Mammary epithelial cell (primary cell): ENCODE measurements at regions of chr9 and their contacts with region 1.

Region 1: DNA sequence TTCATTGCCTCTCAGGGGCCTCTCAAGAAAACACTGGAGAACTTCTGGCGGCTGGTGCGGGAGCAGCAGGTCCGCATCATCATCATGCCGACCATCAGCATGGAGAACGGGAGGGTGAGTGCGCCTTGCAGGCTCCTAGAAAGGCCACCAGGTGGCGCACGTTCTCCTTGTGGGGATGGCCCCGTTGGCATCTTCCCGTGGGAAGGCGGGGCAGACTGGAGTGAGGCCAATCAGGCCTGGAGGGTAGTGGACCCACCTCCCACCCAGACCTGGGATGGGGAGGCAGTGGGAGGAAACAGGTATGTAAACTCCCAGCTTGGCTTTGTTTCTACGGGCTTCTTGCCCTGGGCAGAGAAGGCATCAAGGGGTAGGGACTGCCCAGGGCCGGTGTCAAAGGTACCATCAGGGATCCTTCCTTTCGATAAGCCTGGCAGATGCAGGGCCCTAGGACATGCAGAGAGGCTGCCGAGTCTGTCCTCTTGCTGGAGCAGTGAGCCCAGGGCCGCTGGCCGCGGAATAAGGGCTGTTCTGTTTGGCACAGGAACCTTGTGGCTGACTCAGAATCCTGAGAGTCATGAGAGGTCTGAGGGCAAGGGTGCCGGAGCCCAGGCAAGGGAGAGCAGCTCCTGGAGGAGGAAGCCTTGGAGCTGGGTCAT is 18.9 kb upstream of the SPTLC1 start:
- DNase-seq: peak; percentile 80
- H3K4me3 ChIP-seq: peak overlapping the region in 1 of 3 experiments; percentile 31
- H3K27ac ChIP-seq: no peak overlapping the region
- H3K4me1 ChIP-seq: peaks cover 11% of the 10 kb centered on the region
- H3K27me3 ChIP-seq: no peaks in the 10 kb centered on the region
- CTCF ChIP-seq: peak; percentile 94 to 98

Region 2: GRCh38 chr9:91694081-91694870 is 439.8 kb before region 1 on chr9:
- CTCF ChIA-PET with region 1: no interaction called
- dilution Hi-C with region 1: no loop called
- in situ Hi-C with region 1: no loop called
- intact Hi-C with region 1: no loop called
- DNase-seq: no peak
- H3K4me3 ChIP-seq: no peak overlapping the region
- H3K27ac ChIP-seq: no peak overlapping the region
- H3K4me1 ChIP-seq: no peaks in the 10 kb centered on the region
- H3K27me3 ChIP-seq: no peaks in the 10 kb centered on the region
- CTCF ChIP-seq: no peak

Region 3: DNA sequence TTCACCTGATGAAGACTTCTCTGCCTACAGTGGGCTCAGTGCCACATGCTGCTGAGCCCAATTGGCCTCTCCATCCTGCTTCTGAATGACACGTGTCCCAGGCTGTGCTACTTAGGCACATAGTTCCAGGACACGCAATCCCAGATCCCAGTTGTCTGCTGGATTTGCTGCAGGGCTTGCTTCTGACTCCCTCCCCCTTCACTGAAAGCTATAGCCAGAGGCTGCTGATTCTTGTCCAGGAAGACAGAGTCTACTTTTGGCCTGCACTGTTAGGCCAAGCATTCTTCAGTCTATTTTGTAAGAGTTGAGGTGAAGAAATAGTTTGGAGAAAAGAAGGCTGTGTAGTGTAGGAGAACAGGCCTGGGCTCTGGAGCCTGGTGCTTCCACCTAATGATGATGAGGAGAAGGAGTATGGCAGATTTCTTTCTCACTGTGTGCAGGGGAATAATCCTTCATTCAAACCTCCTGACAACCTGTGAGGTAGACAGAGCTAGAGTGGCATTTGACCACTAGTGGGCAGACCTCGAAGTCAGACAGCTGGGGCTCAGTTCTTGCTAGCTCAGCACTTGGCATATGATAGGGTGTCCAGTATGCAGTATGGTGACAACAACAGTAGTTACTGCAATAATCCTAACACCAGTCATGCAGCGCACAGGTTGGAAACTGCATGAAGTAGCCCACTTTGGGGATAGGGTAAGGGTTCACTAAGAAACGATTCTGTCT is 367.8 kb after region 1 on chr9:
- CTCF ChIA-PET with region 1: no interaction called
- dilution Hi-C with region 1: no loop called
- in situ Hi-C with region 1: no loop called
- intact Hi-C with region 1: loop called (anchors 10 kb)
- DNase-seq: peak; percentile 38
- H3K4me3 ChIP-seq: no peak overlapping the region
- H3K27ac ChIP-seq: no peak overlapping the region
- H3K4me1 ChIP-seq: peaks cover 29% of the 10 kb centered on the region
- H3K27me3 ChIP-seq: no peaks in the 10 kb centered on the region
- CTCF ChIP-seq: peak; percentile 62 to 73

Region 4: DNA sequence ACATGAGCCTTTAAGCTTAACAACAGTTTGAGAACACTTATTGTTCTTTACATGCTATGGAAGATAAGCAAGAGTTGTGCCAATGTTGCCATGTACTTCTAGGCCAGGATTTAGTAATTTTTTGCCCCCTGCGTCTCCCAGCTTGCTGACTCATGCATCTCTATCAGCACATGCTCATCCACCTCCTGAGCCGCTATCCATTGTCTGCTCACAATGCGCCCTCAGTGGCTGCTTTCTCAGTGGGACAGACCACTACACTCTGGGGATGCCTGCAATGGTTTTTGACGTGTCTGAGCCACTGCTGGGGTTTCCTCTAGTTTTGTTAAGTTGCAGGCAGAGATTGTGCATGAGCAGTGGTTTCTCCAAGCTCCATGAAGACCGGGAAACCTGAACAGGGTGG is 1391.4 kb after region 1 on chr9:
- CTCF ChIA-PET with region 1: no interaction called
- dilution Hi-C with region 1: no loop called
- in situ Hi-C with region 1: no loop called
- intact Hi-C with region 1: no loop called
- DNase-seq: no peak
- H3K4me3 ChIP-seq: no peak overlapping the region
- H3K27ac ChIP-seq: no peak overlapping the region
- H3K4me1 ChIP-seq: no peaks in the 10 kb centered on the region
- H3K27me3 ChIP-seq: no peaks in the 10 kb centered on the region
- CTCF ChIP-seq: no peak